ENCODE measurements at regions of chr12 and their contacts with region 1.

Region 1: DNA sequence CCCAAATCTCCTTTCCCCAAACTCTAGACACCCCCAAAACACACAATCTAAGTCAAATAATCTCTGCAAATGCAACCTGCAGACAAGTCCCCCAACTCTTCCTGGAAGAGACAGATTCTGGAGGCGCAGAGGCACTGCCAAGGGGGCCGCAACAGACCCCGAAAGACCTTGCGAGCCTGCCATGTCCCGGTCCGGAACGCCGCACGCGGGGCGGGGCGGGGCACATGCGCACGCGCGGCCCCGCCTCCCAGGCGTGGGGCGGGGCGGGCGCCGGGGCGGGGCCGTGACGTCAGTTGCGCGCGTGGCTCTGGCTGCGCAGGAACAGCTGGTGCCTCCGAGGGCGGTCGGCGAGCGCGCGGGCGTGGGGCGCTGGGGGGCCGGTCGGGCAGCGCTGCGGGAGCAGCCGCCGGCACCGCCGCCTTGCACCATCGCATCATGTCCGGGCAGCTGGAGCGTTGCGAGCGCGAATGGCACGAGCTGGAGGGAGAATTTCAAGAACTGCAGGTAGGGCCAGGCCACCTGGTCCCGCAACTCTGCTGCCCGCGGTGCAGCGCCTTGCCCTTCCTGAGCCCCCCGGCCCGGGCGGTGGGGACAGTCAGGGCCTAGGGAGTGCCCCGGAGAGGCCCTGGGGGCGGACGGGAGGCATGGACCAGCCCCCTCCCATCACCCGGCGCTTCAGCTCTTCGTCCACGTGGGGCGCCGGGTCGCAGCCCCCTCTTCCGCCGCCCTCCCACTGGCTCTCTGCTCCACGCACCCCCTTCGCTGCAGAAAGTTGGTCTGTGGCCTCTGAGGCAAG is at the start of gene TMEM120B:
- DNase-seq: peak; percentile 71 to 93 (median 82)
- ATAC-seq: peak; percentile 87
- H3K4me3 ChIP-seq: peak within 1 kb of the TSS; percentile 99
- H3K4me3 Mint-ChIP-seq: peak within 1 kb of the TSS; percentile 90
- H3K27ac ChIP-seq: peak within 1 kb of the TSS; percentile 40 to 54
- H3K27ac Mint-ChIP-seq: peak within 1 kb of the TSS; percentile 83
- H3K4me1 ChIP-seq: peaks cover 27% of the 10 kb centered on the region
- H3K4me1 Mint-ChIP-seq: peaks cover 19% of the 10 kb centered on the region
- H3K27me3 ChIP-seq: no peaks in the 10 kb centered on the region
- H3K27me3 Mint-ChIP-seq: no peaks in the 10 kb centered on the region
- CTCF ChIP-seq: peak; percentile 26
- total RNA-seq, gene TMEM120B: 7.3 to 7.7 TPM

Region 2: GRCh38 chr12:121688966-121689365 is 23.7 kb before region 1 on chr12:
- CTCF ChIA-PET with region 1: no interaction called
- POLR2A ChIA-PET with region 1: interaction called, 12 read pairs
- intact Hi-C with region 1: loop called in 1 of 2 experiments (anchors 1 kb)
- DNase-seq: no peak
- ATAC-seq: no peak
- H3K4me3 ChIP-seq: no peak overlapping the region
- H3K4me3 Mint-ChIP-seq: no peak overlapping the region
- H3K27ac ChIP-seq: no peak overlapping the region
- H3K27ac Mint-ChIP-seq: no peak overlapping the region
- H3K4me1 ChIP-seq: peaks cover 14% of the 10 kb centered on the region
- H3K4me1 Mint-ChIP-seq: peaks cover 12% of the 10 kb centered on the region
- H3K27me3 ChIP-seq: no peaks in the 10 kb centered on the region
- H3K27me3 Mint-ChIP-seq: no peaks in the 10 kb centered on the region
- CTCF ChIP-seq: no peak

Region 3: DNA sequence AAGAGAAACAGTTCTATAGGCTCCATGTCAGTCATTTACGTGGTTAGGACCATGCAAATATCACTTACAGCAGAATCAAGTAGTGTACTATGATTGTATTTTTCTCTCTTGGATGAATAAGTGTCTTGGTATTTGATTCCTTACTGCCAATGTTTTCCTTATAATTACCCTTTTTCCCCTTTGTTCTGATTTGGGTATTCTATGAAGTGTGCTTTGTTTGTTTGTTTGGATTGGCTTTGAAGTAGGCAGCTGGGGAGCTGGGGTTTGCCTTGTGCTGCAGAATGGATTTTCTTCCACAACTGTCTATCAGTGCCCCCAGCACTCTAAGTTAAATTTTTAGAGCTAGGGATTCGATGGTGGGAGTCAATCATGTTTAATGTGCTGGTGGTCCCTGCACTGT is 12.3 kb after region 1 on chr12:
- CTCF ChIA-PET with region 1: no interaction called
- POLR2A ChIA-PET with region 1: no interaction called
- intact Hi-C with region 1: no loop called
- DNase-seq: no peak
- ATAC-seq: no peak
- H3K4me3 ChIP-seq: no peak overlapping the region
- H3K4me3 Mint-ChIP-seq: no peak overlapping the region
- H3K27ac ChIP-seq: no peak overlapping the region
- H3K27ac Mint-ChIP-seq: no peak overlapping the region
- H3K4me1 ChIP-seq: no peaks in the 10 kb centered on the region
- H3K4me1 Mint-ChIP-seq: no peaks in the 10 kb centered on the region
- H3K27me3 ChIP-seq: no peaks in the 10 kb centered on the region
- H3K27me3 Mint-ChIP-seq: no peaks in the 10 kb centered on the region
- CTCF ChIP-seq: no peak

Region 4: GRCh38 chr12:121839106-121839992 is 126.7 kb after region 1 on chr12:
- CTCF ChIA-PET with region 1: no interaction called
- POLR2A ChIA-PET with region 1: interaction called, 3 read pairs
- intact Hi-C with region 1: loop called in 1 of 2 experiments (anchors 2 kb)
- DNase-seq: peak; percentile 99 to 100 (median 100)
- ATAC-seq: peak; percentile 97
- H3K4me3 ChIP-seq: peak overlapping the region; percentile 85
- H3K4me3 Mint-ChIP-seq: peak overlapping the region; percentile 94
- H3K27ac ChIP-seq: peak overlapping the region; percentile 21 to 44
- H3K27ac Mint-ChIP-seq: peak overlapping the region; percentile 77
- H3K4me1 ChIP-seq: peaks cover 18% of the 10 kb centered on the region
- H3K4me1 Mint-ChIP-seq: peaks cover 14% of the 10 kb centered on the region
- H3K27me3 ChIP-seq: no peaks in the 10 kb centered on the region
- H3K27me3 Mint-ChIP-seq: no peaks in the 10 kb centered on the region
- CTCF ChIP-seq: peak; percentile 54

Region 5: DNA sequence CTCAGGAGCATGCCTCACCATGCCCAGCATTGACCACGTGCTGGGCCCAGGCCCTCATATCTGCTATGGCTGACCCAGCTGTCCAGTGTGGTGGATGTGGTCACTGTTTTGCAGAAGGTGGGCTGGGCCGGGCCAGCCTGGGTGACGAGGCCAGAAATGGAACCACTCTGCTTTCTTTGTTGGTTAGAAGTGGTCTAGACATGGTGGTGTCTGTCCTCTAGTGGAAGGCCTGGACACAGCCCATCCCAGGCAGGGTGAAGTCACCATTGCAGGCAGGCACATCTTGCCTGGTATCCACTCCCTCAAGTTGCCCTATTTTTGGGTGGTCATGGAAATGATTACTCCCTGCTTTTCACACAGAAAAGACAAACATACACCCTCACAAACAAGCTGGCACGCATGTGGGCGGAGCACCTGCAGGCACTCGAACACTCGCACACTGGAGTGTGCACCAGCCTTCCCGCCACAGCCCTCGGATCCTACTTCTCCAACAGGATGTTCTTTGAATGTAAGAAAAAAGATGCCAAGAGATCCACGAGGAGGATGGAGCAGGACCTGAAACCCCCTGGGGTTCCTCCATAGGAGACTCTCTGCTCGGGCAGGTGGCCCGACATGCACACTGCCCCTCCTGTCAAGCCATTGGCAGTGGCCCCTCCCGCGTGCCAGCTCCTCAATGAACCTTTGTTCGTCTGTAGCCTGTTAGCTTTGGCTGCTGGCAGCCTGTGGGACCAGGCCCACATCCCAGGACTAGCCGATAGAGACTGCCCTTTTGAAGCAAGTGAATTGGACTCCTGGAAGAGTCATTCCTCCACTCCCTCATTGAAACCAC is 404.3 kb after region 1 on chr12:
- CTCF ChIA-PET with region 1: no interaction called
- POLR2A ChIA-PET with region 1: no interaction called
- intact Hi-C with region 1: no loop called
- DNase-seq: no peak
- ATAC-seq: no peak
- H3K4me3 ChIP-seq: no peak overlapping the region
- H3K4me3 Mint-ChIP-seq: no peak overlapping the region
- H3K27ac ChIP-seq: no peak overlapping the region
- H3K27ac Mint-ChIP-seq: peak overlapping the region; percentile 0
- H3K4me1 ChIP-seq: peaks cover 4% of the 10 kb centered on the region
- H3K4me1 Mint-ChIP-seq: peaks cover 29% of the 10 kb centered on the region
- H3K27me3 ChIP-seq: no peaks in the 10 kb centered on the region
- H3K27me3 Mint-ChIP-seq: no peaks in the 10 kb centered on the region
- CTCF ChIP-seq: no peak

Measured in CD4-positive, alpha-beta T cell (primary cell).